Dendritic cell treated with granulocyte-macrophage colony-stimulating factor and Interleukin-4, amounts not matched to agents 40 ng/mL and 50 ng/mL, for 4 days (primary cell): ENCODE measurements at regions of chr14 and their contacts with region 1.

Region 1: DNA sequence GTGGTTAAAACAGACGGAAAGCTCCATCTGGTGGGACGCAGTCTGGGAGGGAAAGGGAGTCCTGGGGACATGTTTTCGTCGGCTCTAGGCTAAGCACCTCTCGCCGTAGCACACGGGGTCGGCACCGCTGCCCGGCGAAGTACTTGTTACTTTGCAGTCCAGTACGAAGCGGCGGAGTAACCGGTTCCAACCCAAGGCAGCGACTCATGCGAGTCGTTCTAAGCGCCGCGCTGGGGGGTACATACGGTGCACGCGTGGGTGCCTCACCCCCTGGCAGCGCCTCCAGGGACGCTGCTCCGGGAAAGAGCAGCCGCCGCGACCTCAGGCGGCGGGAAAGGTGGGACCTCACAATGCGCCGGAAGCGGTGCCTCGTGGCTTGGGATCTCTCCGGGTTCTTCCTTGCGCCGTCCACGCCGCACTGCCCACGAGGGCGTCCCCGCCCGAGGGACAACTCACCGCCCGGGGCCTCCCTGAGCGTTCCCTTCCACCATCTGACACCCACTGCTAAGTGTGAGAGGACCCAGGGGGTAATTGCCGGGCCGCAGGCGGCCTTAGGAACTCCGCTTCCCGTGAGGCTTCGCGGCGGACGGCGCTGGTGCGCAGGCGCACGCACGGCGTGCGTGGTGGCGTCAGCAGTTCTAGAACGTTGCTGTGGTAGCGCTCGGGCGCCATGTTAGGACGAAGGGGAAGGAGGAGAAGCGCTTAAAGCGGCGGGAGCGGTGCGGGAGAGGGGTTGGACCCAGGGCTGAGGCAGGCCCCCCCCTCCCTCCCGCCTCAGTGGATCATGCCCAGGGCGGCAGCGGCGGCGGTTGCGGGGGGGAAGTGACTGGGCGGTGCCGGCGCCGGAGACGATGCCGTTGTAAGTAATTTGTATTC is at the start of gene PAPOLA:
- H3K4me3 Mint-ChIP-seq: peak within 1 kb of the TSS; percentile 97
- H3K27ac Mint-ChIP-seq: peak within 1 kb of the TSS; percentile 97
- H3K4me1 Mint-ChIP-seq: peaks cover 53% of the 10 kb centered on the region
- H3K27me3 Mint-ChIP-seq: no peaks in the 10 kb centered on the region

Region 2: GRCh38 chr14:96027431-96028355 is 474.3 kb before region 1 on chr14:
- intact Hi-C with region 1: no loop called
- H3K4me3 Mint-ChIP-seq: no peak overlapping the region
- H3K27ac Mint-ChIP-seq: no peak overlapping the region
- H3K4me1 Mint-ChIP-seq: no peaks in the 10 kb centered on the region
- H3K27me3 Mint-ChIP-seq: peaks cover 7% of the 10 kb centered on the region

Region 3: DNA sequence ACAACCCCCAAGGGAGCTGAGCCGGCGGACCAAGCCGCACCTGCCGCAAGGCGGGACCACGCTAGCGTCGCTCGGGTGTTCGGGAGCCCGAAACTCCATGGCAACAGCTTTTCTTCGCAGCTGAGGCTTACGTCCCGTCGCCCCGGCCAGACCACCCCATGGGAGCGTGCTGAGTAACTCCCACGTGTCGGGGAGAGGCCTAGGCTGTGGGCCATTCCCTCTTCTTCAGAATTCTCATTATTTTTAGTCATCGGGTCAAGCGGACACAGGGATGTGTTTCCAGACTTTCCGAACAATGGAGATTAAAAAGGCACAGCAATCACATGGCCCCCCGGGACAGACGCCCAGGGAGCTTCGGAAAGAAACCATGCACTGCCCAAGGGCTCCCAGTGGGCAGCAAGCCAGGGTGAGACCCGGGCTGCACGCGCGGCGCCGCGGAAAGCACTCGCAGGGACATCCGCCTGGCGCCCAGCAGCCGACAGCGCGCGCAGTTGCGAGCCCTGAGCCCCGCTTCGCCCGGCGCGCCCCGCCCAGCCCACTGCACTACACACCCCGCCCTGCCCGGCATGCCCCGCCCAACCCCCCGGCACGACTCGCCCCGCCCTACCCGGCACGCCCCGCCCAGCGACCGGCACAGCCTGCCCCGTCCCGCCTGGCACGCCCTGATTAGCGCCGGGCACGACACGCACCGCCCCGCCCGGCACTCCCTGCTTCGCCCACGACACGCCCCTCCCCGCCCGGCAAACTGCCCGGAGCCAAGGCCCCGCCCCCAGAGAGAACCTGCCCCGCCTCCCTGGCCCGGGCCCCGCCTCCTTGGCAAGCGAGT is 110.5 kb before region 1 on chr14:
- intact Hi-C with region 1: loop called (anchors 1 kb)
- H3K4me3 Mint-ChIP-seq: peak overlapping the region; percentile 84
- H3K27ac Mint-ChIP-seq: peak overlapping the region; percentile 80
- H3K4me1 Mint-ChIP-seq: peaks cover 7% of the 10 kb centered on the region
- H3K27me3 Mint-ChIP-seq: peaks cover 45% of the 10 kb centered on the region

Region 4: DNA sequence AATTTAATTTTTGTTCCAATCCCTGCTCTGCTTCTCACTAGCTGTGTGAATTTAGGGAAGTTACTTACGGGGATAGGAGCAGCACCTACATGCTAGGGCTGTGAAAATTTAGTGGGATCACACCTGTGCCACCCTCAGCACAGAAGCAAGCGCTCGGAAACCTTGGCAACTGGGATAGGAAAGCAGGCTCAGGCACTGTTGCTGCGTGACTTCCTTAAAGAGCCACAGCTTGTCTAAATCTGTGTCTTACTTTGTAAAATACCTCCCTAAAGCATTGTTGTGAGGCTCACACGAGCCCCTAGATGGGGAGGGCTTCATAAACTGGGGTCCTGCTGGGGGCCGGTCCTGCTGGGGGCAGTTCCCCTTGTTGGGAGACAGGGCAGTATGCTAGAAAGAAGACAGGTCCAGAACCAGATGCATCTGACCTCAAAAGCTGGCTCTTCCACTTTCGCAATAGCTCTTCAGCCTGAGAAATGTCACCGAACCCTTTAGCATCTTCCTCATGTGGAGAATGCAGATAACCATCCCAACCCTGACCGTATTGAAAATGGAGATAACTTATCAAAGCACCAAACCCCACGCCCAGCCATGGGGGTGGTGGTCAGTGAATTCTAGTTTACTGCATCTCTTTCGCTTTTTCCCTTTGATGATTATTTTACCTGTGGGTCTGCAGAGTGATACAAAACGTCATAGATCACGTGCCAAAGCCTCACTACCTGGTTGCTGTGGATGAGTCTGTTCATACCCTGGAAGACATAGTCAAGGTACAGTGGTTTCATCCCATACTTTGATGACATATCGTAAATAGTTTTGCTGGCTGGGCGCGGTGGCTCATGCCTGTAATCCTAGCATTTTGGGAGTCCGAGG is 55.9 kb before region 1 on chr14:
- intact Hi-C with region 1: no loop called
- H3K4me3 Mint-ChIP-seq: no peak overlapping the region
- H3K27ac Mint-ChIP-seq: no peak overlapping the region
- H3K4me1 Mint-ChIP-seq: no peaks in the 10 kb centered on the region
- H3K27me3 Mint-ChIP-seq: peaks cover 2% of the 10 kb centered on the region